ENCODE measurements at regions of chr2 and their contacts with region 1.

Region 1: GRCh38 chr2:227783404-227784138 is 30.1 kb upstream of the CCL20 start:
- DNase-seq: peak; percentile 81
- ATAC-seq: peak; percentile 91
- H3K4me3 ChIP-seq: peak overlapping the region; percentile 57
- H3K27ac ChIP-seq: peak overlapping the region; percentile 75
- H3K4me1 ChIP-seq: peaks cover 20% of the 10 kb centered on the region
- H3K27me3 ChIP-seq: no peaks in the 10 kb centered on the region
- CTCF ChIP-seq: no peak
- EP300 ChIP-seq: peak in 1 of 2 experiments; percentile 71; a peak in 1 of 4 replicates
- POLR2A ChIP-seq: 0 out of 2 replicates have a peak, but pooled peaks have one; percentile 39
- RAD21 ChIP-seq: no peak

Region 2: DNA sequence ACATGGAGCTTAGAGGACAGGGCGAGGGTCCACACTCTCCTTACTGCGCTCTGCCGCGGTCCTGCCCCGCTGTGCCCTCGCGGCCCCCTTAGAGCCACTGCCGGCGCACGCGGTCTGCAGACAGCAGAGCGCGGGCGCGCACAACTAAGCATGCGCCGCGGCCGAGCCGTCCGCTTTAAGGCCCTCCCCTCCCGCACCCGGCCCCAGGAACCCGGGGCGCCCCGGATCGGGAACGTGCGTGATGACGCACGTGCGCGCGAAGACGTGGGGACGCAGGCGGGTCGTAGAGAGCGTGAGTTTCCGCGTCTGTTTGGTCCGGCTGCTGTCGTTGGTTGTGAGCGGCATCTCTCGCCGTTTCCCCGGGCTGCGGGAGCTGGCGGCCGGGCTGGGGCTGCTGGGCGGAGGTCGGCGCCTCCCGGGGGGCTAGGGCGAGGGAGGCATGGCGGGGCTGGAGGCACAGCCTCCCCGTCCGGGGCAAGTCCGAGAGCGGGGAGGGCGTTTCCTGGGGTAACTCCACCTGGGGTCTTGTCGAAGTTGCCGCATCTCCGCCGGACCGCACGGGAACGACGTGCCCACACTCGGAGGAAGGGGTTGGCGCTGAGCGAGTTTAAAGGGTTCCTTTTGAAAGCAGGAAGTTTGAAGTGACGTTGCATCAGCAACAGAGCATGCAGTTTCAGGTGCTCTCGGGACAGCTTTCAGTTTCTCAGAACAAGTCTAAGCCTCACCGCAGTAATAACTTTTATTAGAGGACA is 947.6 kb before region 1 on chr2 and contains the start of gene RHBDD1:
- CTCF ChIA-PET with region 1: no interaction called
- POLR2A ChIA-PET with region 1: no interaction called
- RAD21 ChIA-PET with region 1: no interaction called
- SMC1A ChIA-PET with region 1: no interaction called
- in situ Hi-C with region 1: loop called (anchors 25 kb)
- intact Hi-C with region 1: no loop called
- DNase-seq: peak; percentile 86
- ATAC-seq: peak; percentile 88
- H3K4me3 ChIP-seq: peak within 1 kb of the TSS; percentile 79
- H3K27ac ChIP-seq: peak within 1 kb of the TSS; percentile 97
- H3K4me1 ChIP-seq: peaks cover 6% of the 10 kb centered on the region; the same call in 1 of the 2 replicates
- H3K27me3 ChIP-seq: no peaks in the 10 kb centered on the region
- CTCF ChIP-seq: no peak
- EP300 ChIP-seq: peak; percentile 36 to 49
- POLR2A ChIP-seq: peak; percentile 98
- RAD21 ChIP-seq: 0 out of 2 replicates have a peak, but pooled peaks have one; percentile 7
- polyA plus RNA-seq, gene RHBDD1: 7.1 to 7.3 TPM

Region 3: DNA sequence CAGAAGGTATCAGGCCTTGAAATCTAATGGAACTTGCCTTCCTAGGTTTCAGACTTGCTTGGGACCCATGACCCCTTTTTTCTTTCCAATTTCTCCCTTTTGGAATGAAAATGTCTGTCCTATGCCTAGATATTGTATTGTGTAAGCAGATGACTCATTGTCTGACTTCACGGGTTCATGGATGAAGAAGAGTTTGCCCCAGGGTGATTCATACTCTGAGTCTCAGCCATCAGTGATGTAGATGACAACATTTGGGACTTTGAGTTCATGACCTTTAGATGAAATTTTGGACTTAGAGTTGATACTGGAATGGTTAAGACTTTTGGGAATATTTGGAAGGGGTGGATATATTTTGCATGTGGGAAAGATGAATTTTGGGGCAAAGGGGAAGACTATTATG is 128.1 kb before region 1 on chr2:
- CTCF ChIA-PET with region 1: no interaction called
- POLR2A ChIA-PET with region 1: no interaction called
- RAD21 ChIA-PET with region 1: interaction called, 13 read pairs
- SMC1A ChIA-PET with region 1: interaction called, 3 read pairs
- in situ Hi-C with region 1: no loop called
- intact Hi-C with region 1: no loop called
- DNase-seq: no peak
- ATAC-seq: peak; percentile 53
- H3K4me3 ChIP-seq: no peak overlapping the region
- H3K27ac ChIP-seq: no peak overlapping the region
- H3K4me1 ChIP-seq: no peaks in the 10 kb centered on the region
- H3K27me3 ChIP-seq: no peaks in the 10 kb centered on the region
- CTCF ChIP-seq: no peak
- EP300 ChIP-seq: no peak
- POLR2A ChIP-seq: no peak
- RAD21 ChIP-seq: no peak

Region 4: DNA sequence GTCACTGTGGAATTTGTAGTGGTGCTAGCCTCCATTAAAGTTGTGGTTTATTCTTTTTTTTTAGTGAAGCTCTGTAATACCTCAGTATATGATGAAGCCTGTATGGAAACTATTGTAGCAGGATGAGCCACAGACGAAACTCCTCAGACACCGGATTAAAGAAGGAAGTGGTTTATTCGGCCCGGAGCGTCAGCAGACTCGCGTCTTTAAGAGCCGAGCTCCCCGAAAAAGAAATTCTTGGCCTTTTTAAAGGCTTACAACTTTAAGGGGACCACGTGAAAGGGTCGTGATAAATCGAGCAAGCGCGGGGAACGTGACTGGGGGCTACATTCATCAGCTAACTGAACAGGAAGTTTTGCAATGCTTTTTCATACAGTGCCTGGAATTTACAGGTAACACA is 22.0 kb after region 1 on chr2:
- CTCF ChIA-PET with region 1: interaction called, 23 read pairs
- POLR2A ChIA-PET with region 1: interaction called, 58 read pairs
- RAD21 ChIA-PET with region 1: interaction called, 52 read pairs
- SMC1A ChIA-PET with region 1: interaction called, 120 read pairs
- in situ Hi-C with region 1: no loop called
- intact Hi-C with region 1: loop called (anchors 1 kb)
- DNase-seq: peak; percentile 45
- ATAC-seq: peak; percentile 77
- H3K4me3 ChIP-seq: no peak overlapping the region
- H3K27ac ChIP-seq: peak overlapping the region; percentile 52
- H3K4me1 ChIP-seq: peaks cover 3% of the 10 kb centered on the region; the same call in 1 of the 2 replicates
- H3K27me3 ChIP-seq: no peaks in the 10 kb centered on the region
- CTCF ChIP-seq: no peak
- EP300 ChIP-seq: no peak
- POLR2A ChIP-seq: no peak
- RAD21 ChIP-seq: no peak

Region 5: GRCh38 chr2:227834423-227834822 is 50.9 kb after region 1 on chr2:
- CTCF ChIA-PET with region 1: interaction called, 3 read pairs
- POLR2A ChIA-PET with region 1: no interaction called
- RAD21 ChIA-PET with region 1: interaction called, 11 read pairs
- SMC1A ChIA-PET with region 1: interaction called, 5 read pairs
- in situ Hi-C with region 1: no loop called
- intact Hi-C with region 1: no loop called
- DNase-seq: no peak
- ATAC-seq: no peak
- H3K4me3 ChIP-seq: no peak overlapping the region
- H3K27ac ChIP-seq: no peak overlapping the region
- H3K4me1 ChIP-seq: no peaks in the 10 kb centered on the region
- H3K27me3 ChIP-seq: no peaks in the 10 kb centered on the region
- CTCF ChIP-seq: no peak
- EP300 ChIP-seq: no peak
- POLR2A ChIP-seq: no peak
- RAD21 ChIP-seq: no peak

Region 6: DNA sequence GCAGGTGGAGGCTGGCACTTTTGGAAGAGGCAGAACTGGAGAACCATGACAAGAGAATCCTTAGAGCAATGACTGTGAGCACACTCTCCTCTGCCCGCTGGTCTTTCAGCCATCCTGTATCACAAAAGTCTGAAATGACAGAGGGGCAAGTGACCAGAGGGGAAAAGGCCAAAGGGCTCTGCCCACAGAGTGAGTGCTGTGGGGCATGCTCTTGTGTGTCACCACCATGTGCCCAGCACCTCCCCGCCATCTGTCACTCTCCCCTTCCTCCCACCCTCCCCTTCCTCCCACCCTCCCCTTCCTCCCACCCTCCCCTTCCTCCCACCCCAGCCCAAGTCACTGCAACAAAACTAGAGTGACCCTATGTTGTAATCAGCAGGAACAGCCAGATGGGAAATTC is 119.8 kb after region 1 on chr2:
- CTCF ChIA-PET with region 1: no interaction called
- POLR2A ChIA-PET with region 1: no interaction called
- RAD21 ChIA-PET with region 1: no interaction called
- SMC1A ChIA-PET with region 1: no interaction called
- in situ Hi-C with region 1: no loop called
- intact Hi-C with region 1: no loop called
- DNase-seq: no peak
- ATAC-seq: no peak
- H3K4me3 ChIP-seq: no peak overlapping the region
- H3K27ac ChIP-seq: no peak overlapping the region
- H3K4me1 ChIP-seq: no peaks in the 10 kb centered on the region
- H3K27me3 ChIP-seq: peaks cover 0 to 2% of the 10 kb centered on the region in 2 experiments; a peak in 2 of 4 replicates
- CTCF ChIP-seq: no peak
- EP300 ChIP-seq: no peak
- POLR2A ChIP-seq: no peak
- RAD21 ChIP-seq: no peak

Region 7: GRCh38 chr2:228590681-228591080 is 807.1 kb after region 1 on chr2:
- CTCF ChIA-PET with region 1: no interaction called
- POLR2A ChIA-PET with region 1: no interaction called
- RAD21 ChIA-PET with region 1: no interaction called
- SMC1A ChIA-PET with region 1: no interaction called
- in situ Hi-C with region 1: no loop called
- intact Hi-C with region 1: loop called (anchors 10 kb)
- DNase-seq: peak; percentile 84
- ATAC-seq: peak; percentile 97
- H3K4me3 ChIP-seq: no peak overlapping the region
- H3K27ac ChIP-seq: no peak overlapping the region; the same call in 1 of the 2 replicates
- H3K4me1 ChIP-seq: peaks cover 6% of the 10 kb centered on the region; the same call in 1 of the 2 replicates
- H3K27me3 ChIP-seq: no peaks in the 10 kb centered on the region
- CTCF ChIP-seq: no peak
- EP300 ChIP-seq: peak; percentile 70 to 88
- POLR2A ChIP-seq: no peak
- RAD21 ChIP-seq: no peak

Measured in GM12878 (cell line).